ENCODE measurements at regions of chrX and their contacts with region 1.

Region 1: DNA sequence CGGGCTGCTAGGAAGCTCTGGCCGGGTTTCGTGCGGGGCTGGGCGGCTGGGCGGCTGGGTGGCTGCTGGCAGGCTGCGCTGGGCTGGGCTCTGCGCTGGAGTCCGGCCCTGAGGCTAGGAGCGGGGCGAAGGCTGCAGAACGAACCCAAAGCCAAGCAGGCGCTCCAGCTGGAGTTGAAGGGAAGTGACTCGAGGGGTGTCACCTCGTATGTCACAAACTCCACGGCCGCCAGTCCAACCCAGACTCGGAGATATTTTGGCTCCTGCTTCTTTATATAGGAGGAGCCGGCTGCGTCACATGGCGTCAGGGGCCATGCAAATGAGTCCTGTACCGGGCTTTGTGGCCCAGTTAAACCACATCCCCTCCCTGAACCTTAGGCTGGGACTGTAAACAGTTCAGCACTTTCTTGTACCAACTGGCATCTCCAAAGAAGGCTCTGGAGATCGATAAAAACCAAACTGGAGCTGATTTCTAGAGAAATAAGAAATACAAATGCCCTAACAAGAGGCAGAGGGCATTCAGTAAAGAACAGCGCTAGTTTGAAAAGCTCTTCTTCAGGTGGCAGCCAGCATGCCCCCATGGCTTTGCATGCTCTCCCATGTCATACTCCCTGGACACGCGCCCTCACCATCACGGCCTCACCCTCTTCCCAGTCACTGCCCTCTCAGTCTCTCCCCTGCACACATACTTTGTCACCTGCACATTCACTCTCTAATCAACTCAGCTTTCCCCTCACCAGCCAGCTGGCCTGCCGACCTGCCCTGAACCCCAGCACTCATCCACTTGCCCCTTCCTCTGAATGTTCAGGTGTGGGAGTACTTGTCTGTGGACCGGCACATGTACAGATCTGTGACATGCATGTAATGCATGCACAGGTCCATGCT is 58.5 kb downstream of the TSC22D3 start:
- DNase-seq: peak; percentile 87
- H3K4me3 Mint-ChIP-seq: peak overlapping the region; percentile 92
- H3K27ac Mint-ChIP-seq: peak overlapping the region; percentile 77
- H3K4me1 Mint-ChIP-seq: peaks cover 37% of the 10 kb centered on the region
- H3K27me3 Mint-ChIP-seq: no peaks in the 10 kb centered on the region

Region 2: GRCh38 chrX:107537815-107538214 is 179.2 kb before region 1 on chrX:
- CTCF ChIA-PET with region 1: interaction called, 3 read pairs
- intact Hi-C with region 1: loop called (anchors 1 kb)
- DNase-seq: peak; percentile 68
- H3K4me3 Mint-ChIP-seq: no peak overlapping the region
- H3K27ac Mint-ChIP-seq: no peak overlapping the region
- H3K4me1 Mint-ChIP-seq: no peaks in the 10 kb centered on the region
- H3K27me3 Mint-ChIP-seq: peaks cover 3% of the 10 kb centered on the region

Region 3: DNA sequence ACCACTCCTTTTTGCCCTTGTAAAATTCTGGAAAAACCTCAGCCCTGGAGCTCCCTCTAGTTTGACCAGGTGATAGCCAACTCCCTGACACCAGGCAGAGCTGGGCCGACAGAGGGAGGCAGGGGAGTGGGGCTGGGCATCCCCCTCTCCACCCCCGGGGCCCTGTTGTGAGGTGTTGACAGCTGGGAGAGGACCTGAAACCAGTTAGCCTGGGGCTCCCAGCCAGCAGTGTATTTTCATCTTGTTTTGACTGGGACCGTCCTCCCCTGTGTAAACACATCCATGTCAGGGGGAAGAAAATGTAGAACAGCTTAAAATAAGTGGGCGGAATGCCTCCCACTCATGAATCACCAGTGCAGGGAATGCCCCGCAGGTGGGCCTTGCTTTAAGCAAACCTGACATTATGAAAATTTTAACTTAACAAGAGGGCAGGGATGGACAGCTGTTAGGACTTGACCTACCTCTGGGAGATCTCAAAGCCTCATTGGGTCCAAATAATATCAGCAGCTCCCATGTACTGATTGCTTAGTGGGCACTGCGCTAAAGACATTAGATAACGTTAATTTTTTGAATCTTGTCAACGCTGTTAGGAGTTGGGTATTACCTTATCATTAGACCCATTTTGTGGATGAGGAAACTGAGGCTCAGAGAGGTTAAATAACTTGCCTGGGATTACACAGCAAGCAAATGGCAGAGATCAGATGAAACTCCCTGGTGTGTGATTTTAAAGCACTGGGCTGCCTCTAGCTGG is 12.7 kb after region 1 on chrX:
- CTCF ChIA-PET with region 1: interaction called, 13 read pairs
- intact Hi-C with region 1: no loop called
- DNase-seq: no peak
- H3K4me3 Mint-ChIP-seq: no peak overlapping the region
- H3K27ac Mint-ChIP-seq: no peak overlapping the region
- H3K4me1 Mint-ChIP-seq: peaks cover 9% of the 10 kb centered on the region
- H3K27me3 Mint-ChIP-seq: no peaks in the 10 kb centered on the region

Region 4: DNA sequence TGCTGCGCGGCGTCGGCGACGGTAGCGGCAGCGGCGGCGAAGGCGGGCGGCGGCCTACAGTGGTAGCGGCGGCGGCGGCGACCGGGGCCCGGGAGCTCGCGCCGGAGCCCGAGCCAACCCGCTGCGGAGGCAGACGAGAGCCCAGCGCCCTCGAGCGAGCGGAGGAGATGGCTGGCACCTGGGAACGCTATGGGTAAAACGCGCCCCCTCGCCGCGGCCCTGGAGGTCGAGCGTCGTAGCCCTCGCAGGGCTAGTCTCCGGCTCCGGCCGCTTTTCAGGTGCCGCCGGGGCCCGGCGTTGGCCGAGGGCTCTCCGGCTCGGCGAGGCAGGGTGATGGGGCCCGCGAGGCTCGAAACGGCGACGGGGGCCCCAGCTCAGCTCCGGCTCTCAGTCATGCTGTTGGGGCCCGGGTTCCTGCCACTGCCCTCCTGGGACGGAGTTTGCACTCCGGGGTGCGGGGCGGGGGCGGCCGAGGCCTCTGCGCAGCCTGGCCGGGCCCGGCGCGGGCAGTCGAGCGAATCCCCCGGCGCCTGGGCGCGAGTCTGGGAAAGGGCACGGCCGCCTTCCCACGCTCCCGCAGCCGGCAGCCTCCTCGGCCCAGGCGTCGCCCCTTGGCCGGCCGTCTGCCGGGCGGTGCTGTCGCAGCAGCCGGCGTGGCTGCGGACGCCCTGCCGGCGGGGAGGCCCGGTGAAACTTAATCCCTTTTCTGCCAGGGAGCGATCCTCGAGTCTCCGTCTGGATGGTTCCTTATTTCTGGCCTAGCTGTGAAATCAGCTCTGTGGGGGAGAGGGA is 109.4 kb after region 1 on chrX:
- CTCF ChIA-PET with region 1: no interaction called
- intact Hi-C with region 1: loop called (anchors 2 kb)
- DNase-seq: peak; percentile 14
- H3K4me3 Mint-ChIP-seq: peak overlapping the region; percentile 77
- H3K27ac Mint-ChIP-seq: peak overlapping the region; percentile 73
- H3K4me1 Mint-ChIP-seq: peaks cover 53% of the 10 kb centered on the region
- H3K27me3 Mint-ChIP-seq: no peaks in the 10 kb centered on the region

Region 5: DNA sequence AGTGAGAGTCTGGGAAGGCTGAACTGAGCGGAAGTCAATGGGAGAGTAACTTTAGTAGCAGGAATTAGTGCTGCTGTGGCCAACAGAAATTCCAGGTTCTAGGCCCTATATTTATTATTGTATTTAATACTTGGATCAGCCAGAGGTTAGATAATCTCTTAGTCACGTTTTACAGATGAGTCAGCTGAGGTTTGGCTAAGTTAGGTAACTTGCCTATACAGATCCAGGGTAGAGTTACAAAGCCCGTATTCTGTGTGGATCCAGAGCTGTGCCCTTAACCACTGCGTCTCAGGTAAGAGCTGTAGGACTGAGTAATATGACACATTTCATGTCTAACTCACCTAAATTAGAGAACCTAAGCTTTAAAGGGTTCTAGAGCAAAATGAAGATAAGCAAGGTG is 353.8 kb after region 1 on chrX:
- CTCF ChIA-PET with region 1: no interaction called
- intact Hi-C with region 1: loop called (anchors 1 kb)
- DNase-seq: no peak
- H3K4me3 Mint-ChIP-seq: no peak overlapping the region
- H3K27ac Mint-ChIP-seq: no peak overlapping the region
- H3K4me1 Mint-ChIP-seq: peaks cover 7% of the 10 kb centered on the region
- H3K27me3 Mint-ChIP-seq: no peaks in the 10 kb centered on the region

Measured in activated naive CD4-positive, alpha-beta T cell treated with anti-CD3 and anti-CD28 coated beads for 36 hours (primary cell).